IMR-90 (cell line): ENCODE measurements at regions of chr3 and their contacts with region 1.

Region 1: GRCh38 chr3:46935168-46935858 is 41.2 kb downstream of the CCDC12 start:
- DNase-seq: peak; percentile 96
- ATAC-seq: peak; percentile 95
- H3K4me3 ChIP-seq: no peak overlapping the region
- H3K27ac ChIP-seq: peak overlapping the region; percentile 91
- H3K4me1 ChIP-seq: peaks cover 52% of the 10 kb centered on the region
- H3K27me3 ChIP-seq: no peaks in the 10 kb centered on the region
- CTCF ChIP-seq: peak; percentile 93
- POLR2A ChIP-seq: no peak
- RAD21 ChIP-seq: peak; percentile 64

Region 2: DNA sequence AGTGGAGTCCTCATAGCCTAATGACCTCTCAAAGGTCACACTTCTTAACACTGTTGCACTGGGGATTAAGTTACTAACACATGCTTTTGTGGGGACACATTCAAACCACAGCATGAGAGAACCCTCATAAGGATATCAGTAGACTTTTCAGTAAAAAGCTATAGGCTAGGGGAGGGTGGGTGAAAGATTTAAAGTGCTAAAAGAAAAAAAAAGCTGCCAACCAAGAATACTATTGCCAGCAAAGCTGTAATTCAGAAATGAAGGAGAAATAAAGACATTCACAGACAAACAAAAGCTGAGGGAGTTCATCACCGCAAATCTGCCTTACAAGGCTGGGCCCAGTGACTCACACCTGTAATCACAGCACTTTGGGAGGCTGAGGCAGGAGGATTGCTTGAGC is 167.3 kb before region 1 on chr3:
- CTCF ChIA-PET with region 1: no interaction called
- POLR2A ChIA-PET with region 1: no interaction called
- dilution Hi-C with region 1: no loop called
- in situ Hi-C with region 1: no loop called
- intact Hi-C with region 1: no loop called
- DNase-seq: no peak
- ATAC-seq: no peak
- H3K4me3 ChIP-seq: no peak overlapping the region
- H3K27ac ChIP-seq: no peak overlapping the region
- H3K4me1 ChIP-seq: no peaks in the 10 kb centered on the region
- H3K27me3 ChIP-seq: no peaks in the 10 kb centered on the region
- CTCF ChIP-seq: no peak
- POLR2A ChIP-seq: no peak
- RAD21 ChIP-seq: no peak

Region 3: DNA sequence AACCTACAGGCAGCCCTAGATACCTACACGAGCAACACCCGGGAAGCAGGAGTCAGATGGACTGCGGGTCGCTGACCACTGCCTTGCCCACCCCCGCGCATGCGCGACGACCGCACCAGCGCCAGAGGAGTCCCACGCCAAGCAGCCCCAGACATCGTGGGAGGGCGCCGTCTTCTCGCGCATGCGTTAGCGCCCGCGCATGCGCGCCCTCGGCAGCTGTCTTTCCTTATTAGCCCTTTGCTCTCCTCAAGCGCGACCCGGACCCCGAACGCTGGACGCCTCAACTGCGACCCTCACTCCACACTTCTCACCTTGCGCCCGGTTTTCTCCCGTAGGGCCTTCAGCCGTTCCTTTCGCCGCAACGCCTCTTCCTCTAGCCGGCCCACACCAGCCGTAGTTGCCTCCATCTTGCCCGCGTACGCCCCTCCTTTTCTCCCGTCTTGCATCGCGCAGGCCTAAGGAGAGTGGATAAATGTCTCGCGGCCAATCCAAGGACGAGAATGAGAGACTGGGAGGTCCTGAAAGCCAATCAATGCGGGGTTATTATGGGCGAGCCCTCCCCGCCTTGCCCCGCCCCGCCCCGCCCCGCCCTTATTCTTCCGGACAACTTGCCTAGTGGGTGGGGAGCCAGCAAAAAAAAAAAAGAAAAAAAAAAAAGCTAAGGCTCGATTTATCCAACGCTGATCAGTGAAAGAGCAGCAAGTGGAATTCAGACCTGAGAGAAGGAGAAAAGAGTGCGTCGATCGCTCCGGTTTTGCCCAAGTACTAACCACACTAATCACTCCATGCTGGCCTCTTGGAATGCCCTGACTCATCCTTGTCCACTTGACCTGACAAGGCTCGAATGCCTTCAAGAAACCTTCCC is 41.2 kb after region 1 on chr3 and contains the start of gene CCDC12:
- CTCF ChIA-PET with region 1: interaction called, 3 read pairs
- POLR2A ChIA-PET with region 1: interaction called, 7 read pairs
- dilution Hi-C with region 1: no loop called
- in situ Hi-C with region 1: no loop called
- intact Hi-C with region 1: loop called (anchors 2 kb)
- DNase-seq: peak; percentile 99
- ATAC-seq: peak; percentile 90
- H3K4me3 ChIP-seq: peak within 1 kb of the TSS; percentile 74
- H3K27ac ChIP-seq: peak within 1 kb of the TSS; percentile 95
- H3K4me1 ChIP-seq: peaks cover 11% of the 10 kb centered on the region
- H3K27me3 ChIP-seq: no peaks in the 10 kb centered on the region
- CTCF ChIP-seq: no peak
- POLR2A ChIP-seq: peak; percentile 96
- RAD21 ChIP-seq: no peak
- total RNA-seq, gene CCDC12: 15.2 and 21.7 TPM in 2 replicates